H1 (cell line): ENCODE measurements at regions of chr16 and their contacts with region 1.

Region 1: DNA sequence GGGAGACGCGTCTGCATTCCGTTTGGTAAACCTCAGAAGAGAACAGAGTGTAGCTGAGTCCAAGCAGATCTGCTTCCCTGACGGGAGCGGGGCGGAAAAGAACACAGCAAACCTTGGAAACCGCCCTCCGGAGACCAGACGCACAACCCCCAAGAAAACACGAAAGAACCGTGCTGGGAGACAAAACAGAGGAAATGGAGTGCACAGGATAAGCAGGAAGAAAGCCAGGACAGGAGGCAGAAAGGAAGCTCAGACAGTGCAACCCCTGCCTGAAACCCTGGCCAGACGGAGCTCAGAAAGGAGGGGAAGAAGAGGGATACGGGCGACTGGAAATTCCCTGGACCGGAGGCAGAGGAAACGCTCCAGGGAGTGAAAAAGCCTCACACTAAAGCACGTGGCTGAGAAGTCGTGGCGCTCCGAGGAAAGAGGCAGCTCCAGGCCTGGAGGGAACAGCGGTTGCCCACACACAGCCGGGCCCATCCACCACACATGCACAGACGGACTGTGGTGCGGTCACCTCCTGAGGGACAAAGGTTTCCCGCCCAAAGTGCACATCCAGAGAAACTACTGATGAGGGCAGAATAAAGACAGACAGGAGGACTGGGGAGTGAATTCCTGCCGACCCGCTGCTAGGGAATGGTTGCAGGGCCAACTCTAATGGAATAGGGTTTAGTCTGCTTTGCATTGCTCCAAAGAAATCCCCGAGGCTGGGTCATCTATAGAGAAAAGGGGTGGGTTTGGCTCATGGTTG is 10.2 kb downstream of the DPEP1 start:
- DNase-seq: no peak
- H3K4me3 ChIP-seq: no peak overlapping the region
- H3K27ac ChIP-seq: no peak overlapping the region
- H3K4me1 ChIP-seq: peaks cover 0 to 23% (median 6%) of the 10 kb centered on the region in 4 experiments; a peak in 6 of 7 replicates
- H3K27me3 ChIP-seq: peaks cover 0 to 15% (median 7%) of the 10 kb centered on the region in 4 experiments; a peak in 5 of 7 replicates
- CTCF ChIP-seq: 0 out of 4 replicates have a peak, but pooled peaks of 1 of the 3 experiments have one; percentile 0
- EP300 ChIP-seq: no peak
- POLR2A ChIP-seq: no peak
- RAD21 ChIP-seq: no peak

Region 2: GRCh38 chr16:89602273-89602951 is 21.3 kb before region 1 on chr16:
- CTCF ChIA-PET with region 1: interaction called, 12 read pairs
- POLR2A ChIA-PET with region 1: interaction called, 6 read pairs
- DNase-seq: peak in 1 of 2 experiments; percentile 74
- H3K4me3 ChIP-seq: peak overlapping the region in 1 of 4 experiments; percentile 15; a peak in 2 of 8 replicates
- H3K27ac ChIP-seq: no peak overlapping the region
- H3K4me1 ChIP-seq: peaks cover 0 to 11% (median 9%) of the 10 kb centered on the region in 4 experiments; a peak in 5 of 7 replicates
- H3K27me3 ChIP-seq: no peaks in the 10 kb centered on the region; a peak in 1 of 7 replicates
- CTCF ChIP-seq: no peak
- EP300 ChIP-seq: no peak
- POLR2A ChIP-seq: peak in 1 of 2 experiments; percentile 43; a peak in 1 of 3 replicates
- RAD21 ChIP-seq: no peak

Region 3: GRCh38 chr16:89641458-89642119 is 17.9 kb after region 1 on chr16:
- CTCF ChIA-PET with region 1: interaction called, 24 read pairs
- POLR2A ChIA-PET with region 1: interaction called, 7 read pairs
- DNase-seq: no peak
- H3K4me3 ChIP-seq: no peak overlapping the region
- H3K27ac ChIP-seq: no peak overlapping the region
- H3K4me1 ChIP-seq: no peaks in the 10 kb centered on the region
- H3K27me3 ChIP-seq: no peaks in the 10 kb centered on the region
- CTCF ChIP-seq: no peak
- EP300 ChIP-seq: no peak
- POLR2A ChIP-seq: no peak
- RAD21 ChIP-seq: no peak

Region 4: DNA sequence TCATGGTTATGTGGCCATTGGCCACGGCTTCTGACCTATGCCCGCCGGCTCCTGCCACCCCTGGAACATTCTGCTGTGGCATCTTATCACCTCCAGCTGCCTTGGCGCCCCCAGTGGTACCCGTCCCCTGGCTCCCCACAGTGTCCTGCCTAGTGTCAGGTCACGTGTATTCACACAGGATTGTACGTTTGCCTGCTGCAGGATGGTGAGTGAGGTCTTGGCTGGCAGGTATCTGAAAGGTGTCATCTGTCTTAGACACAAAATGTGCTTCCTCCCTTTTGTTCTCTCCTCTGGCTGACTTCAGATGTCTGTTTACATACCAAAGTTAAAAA is 370.7 kb after region 1 on chr16:
- CTCF ChIA-PET with region 1: no interaction called
- POLR2A ChIA-PET with region 1: no interaction called
- DNase-seq: no peak
- H3K4me3 ChIP-seq: no peak overlapping the region
- H3K27ac ChIP-seq: peak overlapping the region; percentile 92
- H3K4me1 ChIP-seq: no peaks in the 10 kb centered on the region
- H3K27me3 ChIP-seq: no peaks in the 10 kb centered on the region
- CTCF ChIP-seq: no peak
- EP300 ChIP-seq: no peak
- POLR2A ChIP-seq: no peak
- RAD21 ChIP-seq: no peak